GM23248 (cell line): ENCODE measurements at regions of chr9 and their contacts with region 1.

Region 1: GRCh38 chr9:38195737-38196161 is 126.7 kb upstream of the SHB start:
- DNase-seq: no peak
- H3K4me3 ChIP-seq: no peak overlapping the region
- H3K27ac ChIP-seq: no peak overlapping the region
- H3K4me1 ChIP-seq: no peaks in the 10 kb centered on the region
- H3K27me3 ChIP-seq: peaks cover 14% of the 10 kb centered on the region

Region 2: DNA sequence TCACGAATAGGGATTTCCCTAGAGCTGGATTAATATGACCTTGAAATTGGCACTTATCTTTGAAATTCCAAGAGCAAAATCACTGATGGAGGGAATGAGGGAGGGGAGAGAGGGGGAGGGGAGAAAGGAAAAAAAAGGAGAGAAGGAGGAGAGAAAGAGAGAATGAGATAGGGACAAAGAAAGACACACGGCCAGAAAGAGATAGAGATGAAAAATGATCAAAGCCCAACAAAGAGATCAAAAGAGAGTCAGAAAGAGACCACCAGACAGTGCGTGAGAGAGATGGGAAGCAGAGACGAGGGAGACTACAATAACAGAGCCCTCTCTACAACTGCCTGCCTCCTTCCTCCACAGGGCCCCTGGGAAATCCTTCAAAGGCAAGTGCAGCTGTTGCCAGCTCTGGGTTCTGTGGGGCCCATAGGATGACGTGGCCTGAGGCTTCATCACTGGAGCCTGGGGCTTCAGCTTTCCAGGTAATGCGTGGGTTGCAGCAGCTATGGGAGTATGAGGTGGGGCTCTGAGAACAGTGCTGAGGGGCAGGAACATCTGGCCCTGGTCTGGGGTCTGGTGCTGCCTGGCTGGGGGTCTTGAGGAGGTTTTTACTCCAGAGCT is 68.4 kb before region 1 on chr9:
- in situ Hi-C with region 1: no loop called
- DNase-seq: peak; percentile 25
- H3K4me3 ChIP-seq: no peak overlapping the region
- H3K27ac ChIP-seq: no peak overlapping the region
- H3K4me1 ChIP-seq: no peaks in the 10 kb centered on the region
- H3K27me3 ChIP-seq: peaks cover 21% of the 10 kb centered on the region

Region 3: GRCh38 chr9:38251036-38251860 is 55.5 kb after region 1 on chr9:
- in situ Hi-C with region 1: loop called (anchors 10 kb)
- DNase-seq: no peak
- H3K4me3 ChIP-seq: no peak overlapping the region
- H3K27ac ChIP-seq: no peak overlapping the region
- H3K4me1 ChIP-seq: no peaks in the 10 kb centered on the region
- H3K27me3 ChIP-seq: peaks cover 6% of the 10 kb centered on the region